ENCODE measurements at regions of chr9 and their contacts with region 1.

Region 1: DNA sequence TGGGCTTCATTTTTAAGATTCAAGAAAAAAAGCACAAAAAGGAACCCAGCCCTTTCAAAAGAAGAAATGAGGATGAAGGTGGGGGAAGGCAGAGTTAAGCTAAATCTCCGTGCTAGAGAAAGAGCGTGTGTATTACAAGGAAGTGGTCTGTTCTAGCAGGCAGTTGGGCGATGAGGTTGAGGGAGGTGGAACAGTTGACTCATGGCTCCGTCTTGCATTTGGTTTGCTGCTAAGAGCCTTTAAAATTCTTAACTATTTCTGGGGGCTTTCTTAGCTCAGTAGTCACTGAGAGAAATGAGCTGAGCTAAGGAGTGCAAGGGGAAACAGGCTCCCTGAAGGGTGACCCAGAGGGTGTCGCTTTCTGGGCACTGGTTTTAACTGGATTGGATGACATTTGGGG is 117.4 kb downstream of the GCNT1 start:
- DNase-seq: peak; percentile 84
- H3K4me3 Mint-ChIP-seq: no peak overlapping the region
- H3K27ac Mint-ChIP-seq: peak overlapping the region; percentile 46
- H3K4me1 Mint-ChIP-seq: peaks cover 19% of the 10 kb centered on the region
- H3K27me3 Mint-ChIP-seq: peaks cover 30% of the 10 kb centered on the region

Region 2: GRCh38 chr9:76458903-76459690 is 117.2 kb before region 1 on chr9 and contains the start of gene GCNT1:
- CTCF ChIA-PET with region 1: interaction called, 4 read pairs
- POLR2A ChIA-PET with region 1: no interaction called
- intact Hi-C with region 1: loop called (anchors 5 kb)
- DNase-seq: peak; percentile 94
- H3K4me3 Mint-ChIP-seq: peak within 1 kb of the TSS; percentile 94
- H3K27ac Mint-ChIP-seq: peak within 1 kb of the TSS; percentile 49
- H3K4me1 Mint-ChIP-seq: peaks cover 18% of the 10 kb centered on the region
- H3K27me3 Mint-ChIP-seq: no peaks in the 10 kb centered on the region
- total RNA-seq, gene GCNT1: 6.7 to 6.9 TPM